ENCODE measurements at regions of chr13 and their contacts with region 1.

Region 1: DNA sequence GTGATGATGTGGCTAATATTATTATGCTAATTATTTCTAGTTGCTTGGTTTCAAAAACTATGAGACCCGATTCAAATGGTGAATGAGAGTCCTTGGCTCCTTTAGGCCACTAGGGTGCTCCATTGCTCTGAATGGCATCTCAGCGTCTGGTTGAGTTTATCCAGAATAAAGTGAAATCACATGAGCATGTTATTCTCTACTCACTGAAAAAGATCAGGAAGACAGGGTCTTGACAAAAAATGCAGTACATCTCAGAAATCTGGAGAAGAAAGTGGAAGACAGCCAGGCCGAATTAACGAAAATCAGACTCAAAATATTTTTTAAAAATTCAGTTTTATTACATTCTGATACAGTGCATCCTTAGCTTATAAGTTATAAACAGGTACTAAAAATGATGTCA is 516.2 kb downstream of the MYO16 start:
- DNase-seq: peak in 1 of 2 donors; percentile 42
- ATAC-seq: peak in 7 of 8 donors; percentile 58 to 90 (median 84)
- H3K4me3 ChIP-seq: no peak overlapping the region
- H3K27ac ChIP-seq: no peak overlapping the region
- H3K4me1 ChIP-seq: peaks cover 0 to 4% (median 0%) of the 10 kb centered on the region in 9 donors
- H3K27me3 ChIP-seq: peaks cover 4 to 24% (median 18%) of the 10 kb centered on the region in 7 donors
- CTCF ChIP-seq: peak; percentile 54 to 80 (median 69)

Region 2: GRCh38 chr13:109331898-109332297 is 186.3 kb after region 1 on chr13:
- intact Hi-C with region 1: loop called in 9 of 10 experiments (anchors 2 to 10 kb)
- DNase-seq: no peak
- ATAC-seq: no peak
- H3K4me3 ChIP-seq: no peak overlapping the region
- H3K27ac ChIP-seq: no peak overlapping the region
- H3K4me1 ChIP-seq: peaks cover 0 to 3% (median 0%) of the 10 kb centered on the region in 9 donors
- H3K27me3 ChIP-seq: peaks cover 0 to 11% (median 0%) of the 10 kb centered on the region in 7 donors
- CTCF ChIP-seq: no peak